ENCODE measurements at regions of chr7 and their contacts with region 1.

Region 1: DNA sequence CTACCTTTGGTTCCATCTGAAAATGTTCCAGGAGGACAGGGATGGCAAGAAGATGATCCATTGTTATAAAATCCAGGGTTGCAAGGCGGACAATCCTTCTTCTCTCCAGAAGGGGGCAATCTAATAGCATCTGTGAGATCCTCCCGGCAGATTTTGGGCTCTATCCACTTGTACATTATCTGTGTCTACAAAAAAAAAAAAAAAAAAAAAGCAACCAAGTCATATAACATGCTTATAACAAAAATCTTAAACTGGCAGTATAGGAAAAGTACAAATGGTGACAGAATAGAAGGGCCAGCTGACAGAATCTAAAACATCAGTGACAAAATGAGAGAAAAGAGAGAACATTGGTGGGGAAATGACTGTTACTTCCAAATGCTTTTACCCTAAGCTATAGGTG is 132.7 kb downstream of the ELAPOR2 start:
- DNase-seq: peak; percentile 19
- CTCF ChIP-seq: peak; percentile 63

Region 2: DNA sequence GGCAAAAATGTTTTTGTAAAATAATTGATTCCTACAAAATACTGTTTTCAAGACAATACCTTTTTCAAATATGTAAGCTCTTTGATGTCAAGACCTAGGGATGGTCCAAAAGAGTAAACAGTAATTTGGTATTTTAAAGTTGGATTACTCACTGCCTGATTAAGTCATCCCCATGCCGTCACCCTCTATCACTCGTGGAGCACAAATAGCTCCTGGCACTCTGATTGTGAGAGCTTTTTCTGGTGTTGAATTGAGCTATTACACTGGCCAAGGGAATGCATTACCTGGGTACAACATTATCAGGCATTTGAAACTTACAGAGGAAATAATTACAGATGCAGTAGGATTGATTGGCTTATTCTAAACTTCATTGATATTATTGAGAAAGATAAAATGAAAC is 514.9 kb before region 1 on chr7:
- CTCF ChIA-PET with region 1: no interaction called
- POLR2A ChIA-PET with region 1: no interaction called
- DNase-seq: no peak
- CTCF ChIP-seq: no peak

Region 3: DNA sequence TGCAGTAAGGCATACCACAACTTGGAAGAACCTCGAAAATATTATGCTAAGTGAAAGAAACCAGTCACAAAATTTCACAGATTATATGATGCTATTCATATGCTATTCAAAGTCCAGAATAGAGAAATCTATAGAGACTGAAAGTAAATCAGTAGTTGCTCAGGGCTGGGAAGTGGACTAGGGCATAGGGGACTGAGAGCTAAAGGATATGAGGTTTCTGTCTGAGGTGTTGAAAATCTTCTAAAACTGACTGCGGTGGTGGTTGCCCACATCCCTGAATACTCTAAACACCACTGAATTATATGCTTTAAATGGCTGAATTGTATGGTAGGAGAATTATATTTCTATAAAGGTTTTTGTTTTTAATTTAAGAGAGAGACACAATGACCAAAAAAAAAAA is 28.6 kb before region 1 on chr7:
- CTCF ChIA-PET with region 1: no interaction called
- POLR2A ChIA-PET with region 1: no interaction called
- DNase-seq: no peak
- CTCF ChIP-seq: no peak

Region 4: DNA sequence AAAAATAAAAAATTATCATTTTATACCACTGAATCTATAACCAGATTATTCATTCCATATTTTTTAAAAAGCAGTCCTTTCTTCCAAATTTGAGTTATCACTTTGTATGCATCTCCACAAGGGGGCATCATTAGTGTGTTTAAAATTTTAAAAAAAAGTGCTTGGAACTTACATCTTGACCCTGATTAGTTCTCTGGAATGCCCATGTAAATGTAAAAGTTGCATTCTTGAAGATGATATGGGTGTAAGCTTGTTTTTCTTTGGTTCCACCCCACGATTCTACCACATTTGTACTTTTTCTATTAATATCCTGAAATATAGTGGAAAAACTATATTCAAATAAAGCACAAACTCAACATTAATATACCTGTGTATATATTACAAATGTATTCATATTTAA is 12.2 kb before region 1 on chr7:
- CTCF ChIA-PET with region 1: interaction called, 25 read pairs
- POLR2A ChIA-PET with region 1: no interaction called
- DNase-seq: no peak
- CTCF ChIP-seq: peak; percentile 38

Region 5: DNA sequence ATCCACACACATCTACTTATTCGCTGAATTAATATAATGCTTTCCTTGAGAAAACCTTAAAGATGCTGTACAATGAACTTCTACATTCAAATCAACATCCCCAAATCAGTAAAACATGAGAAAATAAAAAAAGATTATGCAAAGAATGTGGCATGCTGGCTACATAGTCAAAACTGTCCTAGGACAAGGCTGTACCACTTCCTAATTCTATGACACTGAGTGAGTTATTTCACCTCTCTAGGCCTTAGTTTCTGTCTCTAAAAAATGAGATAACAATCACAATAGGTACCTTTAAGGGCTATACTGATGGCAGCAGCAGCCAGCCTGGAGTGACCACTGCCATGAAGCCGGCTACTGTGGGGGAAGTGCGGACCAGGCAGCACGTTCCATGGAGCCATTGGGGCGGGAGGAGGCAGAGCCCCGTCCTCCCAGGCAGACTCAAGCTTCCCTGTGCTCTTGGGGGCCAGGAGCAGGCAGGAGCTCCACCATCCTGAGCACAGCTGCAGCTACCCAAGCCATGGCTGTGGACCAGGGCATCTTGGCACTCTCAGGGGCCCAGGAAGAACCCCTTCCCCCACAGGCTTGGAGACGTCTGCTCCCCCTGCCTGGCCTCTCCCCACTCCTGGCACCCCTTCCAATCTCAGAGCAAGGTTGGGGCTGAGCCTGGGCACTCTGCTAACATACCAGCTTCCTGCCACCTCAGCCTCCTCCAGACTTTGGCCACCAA is 22.5 kb after region 1 on chr7:
- CTCF ChIA-PET with region 1: interaction called, 14 read pairs
- POLR2A ChIA-PET with region 1: no interaction called
- DNase-seq: peak; percentile 56
- CTCF ChIP-seq: no peak

Region 6: DNA sequence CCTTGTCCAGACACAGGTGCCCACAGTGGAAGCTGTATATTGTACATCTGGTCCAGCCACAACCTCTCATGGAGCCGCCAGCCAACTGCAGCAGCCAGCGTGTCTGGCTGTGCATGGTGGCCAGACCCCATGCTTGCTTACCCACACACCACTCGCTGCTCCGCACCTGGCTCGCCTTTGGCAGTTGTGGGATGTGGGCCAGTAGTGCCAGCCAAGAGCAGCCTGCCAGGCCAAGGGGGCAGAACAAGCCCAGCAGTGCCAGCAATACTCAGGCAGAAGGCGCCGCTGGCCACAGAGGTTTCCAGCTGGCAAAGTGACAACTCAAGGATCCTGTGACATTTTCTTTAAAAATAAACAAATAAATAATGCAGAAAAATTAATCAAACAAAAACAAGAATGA is 304.5 kb after region 1 on chr7:
- CTCF ChIA-PET with region 1: interaction called, 10 read pairs
- POLR2A ChIA-PET with region 1: no interaction called
- DNase-seq: no peak
- CTCF ChIP-seq: no peak

Measured in GM10248 (cell line).